Heart left ventricle (tissue), 16 donors: ENCODE measurements at regions of chr17 and their contacts with region 1.

Region 1: GRCh38 chr17:61208301-61209105 is 191.1 kb upstream of the TBX2 start:
- DNase-seq: peak in 1 of 5 donors; percentile 31
- ATAC-seq: peak in 3 of 4 donors; percentile 52 to 70 (median 66)
- H3K4me3 ChIP-seq: peak overlapping the region in 6 of 12 donors; percentile 0 to 16 (median 5)
- H3K27ac ChIP-seq: peak overlapping the region; percentile 45 to 76 (median 65)
- H3K4me1 ChIP-seq: peaks cover 0 to 43% (median 11%) of the 10 kb centered on the region in 12 donors
- H3K27me3 ChIP-seq: no peaks in the 10 kb centered on the region
- CTCF ChIP-seq: no peak
- POLR2A ChIP-seq: no peak

Region 2: GRCh38 chr17:61302953-61303816 is 94.7 kb after region 1 on chr17:
- intact Hi-C with region 1: no loop called
- DNase-seq: no peak
- ATAC-seq: no peak
- H3K4me3 ChIP-seq: no peak overlapping the region
- H3K27ac ChIP-seq: no peak overlapping the region
- H3K4me1 ChIP-seq: no peaks in the 10 kb centered on the region
- H3K27me3 ChIP-seq: no peaks in the 10 kb centered on the region
- CTCF ChIP-seq: no peak
- POLR2A ChIP-seq: no peak

Region 3: GRCh38 chr17:61314368-61315078 is 106.0 kb after region 1 on chr17:
- intact Hi-C with region 1: loop called in 1 of 10 experiments (anchors 10 kb)
- DNase-seq: peak in 4 of 5 donors; percentile 60 to 78 (median 64)
- ATAC-seq: peak; percentile 88 to 95 (median 92)
- H3K4me3 ChIP-seq: no peak overlapping the region
- H3K27ac ChIP-seq: peak overlapping the region; percentile 41 to 81 (median 64)
- H3K4me1 ChIP-seq: peaks cover 7 to 31% (median 24%) of the 10 kb centered on the region in 12 donors
- H3K27me3 ChIP-seq: no peaks in the 10 kb centered on the region
- CTCF ChIP-seq: peak in 7 of 12 donors; percentile 11 to 37 (median 29)
- POLR2A ChIP-seq: no peak